ENCODE measurements at regions of chr3 and their contacts with region 1.

Region 1: GRCh38 chr3:51718547-51719409 is 11.9 kb downstream of the GRM2 start:
- DNase-seq: peak; percentile 83
- H3K4me3 Mint-ChIP-seq: no peak overlapping the region
- H3K27ac Mint-ChIP-seq: no peak overlapping the region
- H3K4me1 Mint-ChIP-seq: peaks cover 22% of the 10 kb centered on the region
- H3K27me3 Mint-ChIP-seq: no peaks in the 10 kb centered on the region

Region 2: DNA sequence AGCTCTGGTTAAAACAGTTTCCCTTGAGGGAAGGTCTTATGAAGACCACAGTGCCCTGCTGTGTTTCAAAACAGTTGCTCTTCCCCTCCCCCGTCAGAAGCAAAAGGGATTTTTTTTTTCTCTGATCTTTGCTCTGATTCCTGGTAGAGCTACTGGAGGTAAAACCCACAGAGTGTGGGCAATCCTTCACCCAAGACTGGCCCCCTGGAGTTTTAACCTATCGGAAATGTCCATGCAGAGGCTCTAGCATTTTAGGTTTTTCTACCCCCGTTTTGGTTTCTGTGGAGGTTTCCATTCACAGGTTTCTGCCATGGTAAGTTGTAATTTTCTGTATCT is 15.8 kb after region 1 on chr3:
- CTCF ChIA-PET with region 1: interaction called, 14 read pairs
- POLR2A ChIA-PET with region 1: no interaction called
- intact Hi-C with region 1: no loop called
- DNase-seq: peak; percentile 52
- H3K4me3 Mint-ChIP-seq: no peak overlapping the region
- H3K27ac Mint-ChIP-seq: no peak overlapping the region
- H3K4me1 Mint-ChIP-seq: peaks cover 17% of the 10 kb centered on the region
- H3K27me3 Mint-ChIP-seq: peaks cover 23% of the 10 kb centered on the region

Region 3: DNA sequence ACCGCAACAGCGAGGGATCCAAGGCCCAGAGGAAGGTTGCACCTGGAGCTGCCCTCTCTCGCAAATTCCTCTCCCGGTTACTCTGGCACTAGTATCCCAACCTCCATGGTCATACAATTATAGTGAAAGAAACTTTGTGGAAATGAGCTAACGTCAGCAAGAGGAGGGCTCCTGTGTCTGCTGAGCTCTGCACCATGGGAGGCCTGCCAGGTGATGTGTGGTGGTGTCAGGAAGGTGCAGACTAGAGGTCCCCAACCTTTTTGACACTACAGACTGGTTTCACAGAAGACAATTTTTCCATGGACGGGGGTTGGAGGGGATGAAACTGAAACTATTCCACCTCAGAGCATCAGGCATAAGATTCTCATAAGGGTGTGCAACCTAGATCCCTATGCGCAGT is 73.4 kb after region 1 on chr3:
- CTCF ChIA-PET with region 1: interaction called, 88 read pairs
- POLR2A ChIA-PET with region 1: no interaction called
- intact Hi-C with region 1: no loop called
- DNase-seq: no peak
- H3K4me3 Mint-ChIP-seq: no peak overlapping the region
- H3K27ac Mint-ChIP-seq: no peak overlapping the region
- H3K4me1 Mint-ChIP-seq: peaks cover 14% of the 10 kb centered on the region
- H3K27me3 Mint-ChIP-seq: peaks cover 11% of the 10 kb centered on the region

Region 4: DNA sequence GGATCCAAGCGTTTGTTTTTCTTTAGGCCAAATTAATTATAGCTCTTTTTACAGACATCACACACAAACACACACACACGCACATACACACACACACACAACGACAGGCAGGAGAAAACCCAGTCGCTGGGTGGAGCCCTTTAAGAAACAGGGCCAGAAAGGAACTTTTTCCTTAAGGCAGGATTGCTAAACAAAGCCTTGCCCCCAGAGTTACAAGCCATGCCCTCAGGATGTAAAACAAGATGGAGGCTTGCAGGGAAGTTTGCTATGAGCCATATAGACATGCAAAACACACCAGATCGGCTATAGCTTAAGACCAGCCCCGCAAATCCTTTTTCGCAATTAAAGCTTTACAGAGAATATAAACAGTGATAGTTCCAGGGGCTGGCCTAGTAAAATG is 126.4 kb after region 1 on chr3:
- CTCF ChIA-PET with region 1: no interaction called
- POLR2A ChIA-PET with region 1: no interaction called
- intact Hi-C with region 1: no loop called
- DNase-seq: no peak
- H3K4me3 Mint-ChIP-seq: no peak overlapping the region
- H3K27ac Mint-ChIP-seq: no peak overlapping the region
- H3K4me1 Mint-ChIP-seq: no peaks in the 10 kb centered on the region
- H3K27me3 Mint-ChIP-seq: peaks cover 27% of the 10 kb centered on the region

Region 5: GRCh38 chr3:51896607-51897305 is 178.0 kb after region 1 on chr3:
- CTCF ChIA-PET with region 1: no interaction called
- POLR2A ChIA-PET with region 1: no interaction called
- intact Hi-C with region 1: no loop called
- DNase-seq: no peak
- H3K4me3 Mint-ChIP-seq: no peak overlapping the region
- H3K27ac Mint-ChIP-seq: no peak overlapping the region
- H3K4me1 Mint-ChIP-seq: peaks cover 14% of the 10 kb centered on the region
- H3K27me3 Mint-ChIP-seq: peaks cover 32% of the 10 kb centered on the region

Region 6: GRCh38 chr3:52798978-52799476 is 1080.2 kb after region 1 on chr3:
- CTCF ChIA-PET with region 1: no interaction called
- POLR2A ChIA-PET with region 1: no interaction called
- intact Hi-C with region 1: no loop called
- DNase-seq: peak; percentile 41
- H3K4me3 Mint-ChIP-seq: no peak overlapping the region
- H3K27ac Mint-ChIP-seq: no peak overlapping the region
- H3K4me1 Mint-ChIP-seq: no peaks in the 10 kb centered on the region
- H3K27me3 Mint-ChIP-seq: no peaks in the 10 kb centered on the region

Measured in activated CD4-positive, alpha-beta memory T cell treated with anti-CD3 and anti-CD28 coated beads for 36 hours (primary cell).